Astrocyte of the cerebellum (primary cell): ENCODE measurements at regions of chr12 and their contacts with region 1.

Region 1: DNA sequence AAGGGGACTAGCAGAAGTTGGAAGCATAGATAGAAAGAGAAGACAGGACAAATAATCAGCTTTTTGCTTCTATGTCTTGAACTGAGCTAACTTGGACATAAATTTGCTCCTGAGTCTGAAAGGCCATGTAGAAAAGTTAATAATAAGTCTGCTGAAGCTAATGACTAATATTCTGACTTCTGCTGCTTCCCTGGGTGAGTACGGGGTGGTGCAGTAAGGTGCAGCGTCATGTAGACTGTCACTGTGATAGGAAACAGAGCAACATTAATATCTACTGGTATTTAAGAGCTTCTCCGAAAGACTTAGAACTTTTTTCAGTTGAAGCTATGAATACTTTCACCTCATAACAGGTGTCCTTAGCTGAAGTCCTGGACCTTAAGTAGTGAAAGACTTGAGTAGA is 34.1 kb upstream of the CPM start:
- DNase-seq: no peak
- H3K4me3 ChIP-seq: no peak overlapping the region
- CTCF ChIP-seq: no peak

Region 2: GRCh38 chr12:68871921-68872320 is 95.1 kb before region 1 on chr12:
- in situ Hi-C with region 1: loop called (anchors 5 kb)
- DNase-seq: peak; percentile 27
- H3K4me3 ChIP-seq: no peak overlapping the region
- CTCF ChIP-seq: peak; percentile 50

Region 3: DNA sequence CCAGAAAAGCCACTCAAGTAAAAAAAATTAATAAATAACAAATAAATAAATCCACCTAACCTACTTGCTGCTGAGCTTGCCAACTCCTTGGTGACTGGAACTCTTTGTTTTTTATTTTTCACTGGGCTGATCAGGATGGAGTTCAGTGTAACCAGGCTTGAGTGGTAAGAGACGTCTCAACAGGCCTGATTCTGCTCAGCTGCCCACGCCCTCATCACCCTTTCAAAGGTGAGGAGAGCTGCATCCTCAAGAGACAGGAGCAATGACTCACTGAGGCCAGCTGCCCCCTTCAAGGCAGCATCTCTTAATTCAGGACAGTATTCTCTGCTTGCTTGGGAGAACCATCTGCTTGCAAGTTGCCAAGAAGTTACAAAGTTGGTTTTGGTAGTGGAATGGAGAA is 77.8 kb after region 1 on chr12:
- in situ Hi-C with region 1: loop called (anchors 5 kb)
- DNase-seq: no peak
- H3K4me3 ChIP-seq: no peak overlapping the region
- CTCF ChIP-seq: no peak

Region 4: GRCh38 chr12:69211160-69211559 is 244.1 kb after region 1 on chr12:
- in situ Hi-C with region 1: no loop called
- DNase-seq: no peak
- H3K4me3 ChIP-seq: no peak overlapping the region
- CTCF ChIP-seq: no peak